PC-3 (cell line): ENCODE measurements at regions of chr21 and their contacts with region 1.

Region 1: DNA sequence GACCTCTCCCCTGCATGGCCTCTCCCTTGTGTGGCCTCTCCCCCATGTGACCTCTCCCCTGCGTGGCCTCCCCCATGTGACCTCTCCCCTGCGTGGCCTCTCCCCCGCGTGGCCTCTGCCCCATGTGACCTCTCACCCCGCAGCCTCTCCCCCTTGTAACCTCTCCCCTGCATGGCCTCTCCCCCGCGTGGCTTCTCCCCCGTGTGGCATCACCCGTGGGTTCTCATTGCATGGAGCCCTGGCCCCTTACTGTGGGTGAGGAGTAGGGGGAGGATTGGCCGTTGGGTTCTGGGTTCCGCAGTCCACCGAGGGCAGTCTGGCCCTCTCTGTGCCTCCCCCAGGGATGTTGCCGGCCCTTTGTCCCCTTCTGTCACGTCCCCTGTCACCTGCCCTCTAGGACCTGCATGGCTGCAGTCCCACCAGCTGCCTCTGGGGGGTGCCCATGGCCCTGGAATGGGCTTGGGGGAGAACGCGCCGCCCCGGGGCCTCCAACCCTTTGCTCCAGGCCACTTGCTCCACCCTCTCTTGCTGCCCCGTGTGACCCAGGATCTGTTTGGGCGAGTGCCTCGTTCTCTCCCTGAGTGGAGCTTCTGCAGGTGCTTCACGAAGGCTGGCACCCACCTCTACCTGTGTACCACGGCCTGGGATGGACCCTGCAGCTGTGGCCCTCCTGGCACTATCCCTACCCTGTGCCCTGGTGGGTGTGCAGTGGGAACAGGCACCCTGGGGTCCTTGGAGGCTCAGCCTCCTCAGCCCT is 21.3 kb downstream of the RRP1 start:
- DNase-seq: peak; percentile 88
- ATAC-seq: peak; percentile 72
- H3K4me3 ChIP-seq: no peak overlapping the region
- H3K27ac ChIP-seq: no peak overlapping the region
- H3K4me1 ChIP-seq: peaks cover 16% of the 10 kb centered on the region
- H3K27me3 ChIP-seq: no peaks in the 10 kb centered on the region
- CTCF ChIP-seq: peak; percentile 96

Region 2: DNA sequence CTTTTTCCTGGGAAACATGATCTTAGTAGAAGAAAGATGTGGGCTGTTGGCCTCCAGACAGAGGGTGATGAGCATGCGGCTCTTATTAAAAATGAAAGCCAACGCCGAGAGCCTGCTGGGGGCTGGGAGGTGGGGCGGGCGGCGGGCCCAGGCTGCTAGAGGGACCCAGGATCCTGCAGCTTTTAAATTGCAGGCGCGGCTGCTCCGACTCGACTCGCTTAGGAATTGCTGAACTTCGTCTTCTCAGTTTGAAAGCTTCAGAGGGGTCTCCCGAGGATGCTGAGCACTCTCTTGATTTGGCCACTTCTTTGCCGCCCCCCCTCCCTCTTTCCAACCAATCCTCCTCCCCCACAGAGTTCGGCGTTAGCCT is 55.6 kb after region 1 on chr21:
- CTCF ChIA-PET with region 1: no interaction called
- POLR2A ChIA-PET with region 1: no interaction called
- intact Hi-C with region 1: loop called (anchors 5 kb)
- DNase-seq: peak; percentile 50
- ATAC-seq: peak; percentile 30
- H3K4me3 ChIP-seq: peak overlapping the region; percentile 87
- H3K27ac ChIP-seq: peak overlapping the region; percentile 53
- H3K4me1 ChIP-seq: peaks cover 26% of the 10 kb centered on the region
- H3K27me3 ChIP-seq: no peaks in the 10 kb centered on the region
- CTCF ChIP-seq: no peak

Region 3: GRCh38 chr21:43916691-43917514 is 106.2 kb after region 1 on chr21:
- CTCF ChIA-PET with region 1: no interaction called
- POLR2A ChIA-PET with region 1: no interaction called
- intact Hi-C with region 1: loop called (anchors 5 kb)
- DNase-seq: no peak
- ATAC-seq: no peak
- H3K4me3 ChIP-seq: no peak overlapping the region
- H3K27ac ChIP-seq: no peak overlapping the region
- H3K4me1 ChIP-seq: no peaks in the 10 kb centered on the region
- H3K27me3 ChIP-seq: no peaks in the 10 kb centered on the region
- CTCF ChIP-seq: no peak

Region 4: GRCh38 chr21:43938751-43939442 is 128.2 kb after region 1 on chr21:
- CTCF ChIA-PET with region 1: no interaction called
- POLR2A ChIA-PET with region 1: no interaction called
- intact Hi-C with region 1: loop called (anchors 5 kb)
- DNase-seq: peak; percentile 64
- ATAC-seq: peak; percentile 92
- H3K4me3 ChIP-seq: peak overlapping the region; percentile 52
- H3K27ac ChIP-seq: no peak overlapping the region
- H3K4me1 ChIP-seq: no peaks in the 10 kb centered on the region
- H3K27me3 ChIP-seq: no peaks in the 10 kb centered on the region
- CTCF ChIP-seq: peak; percentile 95

Region 5: DNA sequence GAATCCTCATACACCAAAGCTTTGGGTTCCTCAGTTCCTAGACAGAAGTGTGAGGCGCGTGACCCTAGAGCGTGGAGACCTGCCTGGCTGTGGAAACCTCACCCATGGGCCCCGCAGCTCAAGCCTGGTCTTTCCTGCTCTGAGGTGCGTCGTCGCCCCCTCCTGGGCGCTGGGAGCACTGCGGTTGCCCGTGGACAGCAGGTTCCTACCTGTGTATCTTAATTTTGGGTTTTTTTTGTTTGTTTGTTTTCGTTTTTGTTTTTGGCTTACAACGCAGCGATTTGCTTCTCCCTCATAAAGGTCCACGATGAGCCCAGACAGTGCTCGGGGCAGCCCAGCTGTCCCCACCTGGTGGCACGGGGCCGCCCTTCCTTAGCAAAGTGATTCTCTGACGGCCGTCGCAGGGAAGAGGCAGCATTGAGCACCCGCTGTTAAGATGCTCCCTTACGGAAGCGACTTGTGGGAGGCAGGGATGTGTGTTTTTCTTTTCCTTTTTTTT is 164.9 kb after region 1 on chr21:
- CTCF ChIA-PET with region 1: interaction called, 6 read pairs
- POLR2A ChIA-PET with region 1: no interaction called
- intact Hi-C with region 1: loop called (anchors 1 kb)
- DNase-seq: peak; percentile 78
- ATAC-seq: peak; percentile 50
- H3K4me3 ChIP-seq: no peak overlapping the region
- H3K27ac ChIP-seq: no peak overlapping the region
- H3K4me1 ChIP-seq: peaks cover 26% of the 10 kb centered on the region
- H3K27me3 ChIP-seq: no peaks in the 10 kb centered on the region
- CTCF ChIP-seq: peak; percentile 96

Region 6: DNA sequence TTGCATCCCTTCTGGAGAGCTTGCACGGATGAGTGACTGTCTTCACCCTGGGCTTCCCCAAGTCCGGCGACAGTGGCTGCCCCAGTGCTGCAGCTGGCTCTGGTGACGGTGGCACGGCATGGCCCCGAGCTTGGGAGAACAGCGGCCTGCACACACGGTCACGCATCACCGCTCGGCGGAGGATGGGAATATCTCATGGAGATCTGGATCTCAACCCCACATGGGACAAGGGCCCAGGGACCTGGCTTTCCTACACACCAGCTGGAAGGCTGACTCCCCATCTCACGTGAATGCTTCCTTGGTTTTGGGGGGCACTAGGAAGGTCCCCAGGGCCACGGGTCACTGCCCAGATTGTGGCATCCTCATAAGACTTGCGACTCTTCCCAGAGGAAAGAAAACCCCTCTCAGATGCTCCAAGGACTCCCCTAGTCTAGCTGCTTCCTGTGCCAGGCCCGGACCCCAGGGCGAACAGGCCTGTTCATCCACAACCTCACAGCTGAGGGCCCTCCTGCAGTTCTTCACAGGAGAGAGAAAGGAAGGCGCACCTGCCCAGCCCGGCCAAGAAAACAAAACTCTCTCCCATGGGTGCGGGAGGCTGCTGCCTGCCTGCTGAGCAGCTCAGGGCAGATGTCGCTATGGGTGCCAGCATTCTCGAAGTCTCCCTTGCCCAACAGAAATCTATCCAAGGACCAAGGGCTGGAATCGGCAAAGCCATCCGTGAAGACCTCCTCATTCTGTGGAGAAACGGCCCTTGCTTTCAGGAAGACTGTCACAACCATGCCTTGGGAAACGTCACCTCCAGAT is 518.6 kb after region 1 on chr21:
- CTCF ChIA-PET with region 1: no interaction called
- POLR2A ChIA-PET with region 1: no interaction called
- intact Hi-C with region 1: no loop called
- DNase-seq: no peak
- ATAC-seq: 0 out of 2 replicates have a peak, but pooled peaks have one; percentile 8
- H3K4me3 ChIP-seq: no peak overlapping the region
- H3K27ac ChIP-seq: no peak overlapping the region
- H3K4me1 ChIP-seq: no peaks in the 10 kb centered on the region
- H3K27me3 ChIP-seq: no peaks in the 10 kb centered on the region
- CTCF ChIP-seq: no peak